ENCODE measurements at regions of chr9 and their contacts with region 1.

Region 1: GRCh38 chr9:126704873-126705766 is 91.4 kb downstream of the LMX1B start:
- DNase-seq: peak; percentile 92
- H3K4me3 ChIP-seq: no peak overlapping the region
- H3K27ac ChIP-seq: no peak overlapping the region
- H3K4me1 ChIP-seq: peaks cover 14% of the 10 kb centered on the region
- H3K27me3 ChIP-seq: no peaks in the 10 kb centered on the region
- CTCF ChIP-seq: peak; percentile 91 to 97 (median 92)
- POLR2A ChIP-seq: no peak

Region 2: DNA sequence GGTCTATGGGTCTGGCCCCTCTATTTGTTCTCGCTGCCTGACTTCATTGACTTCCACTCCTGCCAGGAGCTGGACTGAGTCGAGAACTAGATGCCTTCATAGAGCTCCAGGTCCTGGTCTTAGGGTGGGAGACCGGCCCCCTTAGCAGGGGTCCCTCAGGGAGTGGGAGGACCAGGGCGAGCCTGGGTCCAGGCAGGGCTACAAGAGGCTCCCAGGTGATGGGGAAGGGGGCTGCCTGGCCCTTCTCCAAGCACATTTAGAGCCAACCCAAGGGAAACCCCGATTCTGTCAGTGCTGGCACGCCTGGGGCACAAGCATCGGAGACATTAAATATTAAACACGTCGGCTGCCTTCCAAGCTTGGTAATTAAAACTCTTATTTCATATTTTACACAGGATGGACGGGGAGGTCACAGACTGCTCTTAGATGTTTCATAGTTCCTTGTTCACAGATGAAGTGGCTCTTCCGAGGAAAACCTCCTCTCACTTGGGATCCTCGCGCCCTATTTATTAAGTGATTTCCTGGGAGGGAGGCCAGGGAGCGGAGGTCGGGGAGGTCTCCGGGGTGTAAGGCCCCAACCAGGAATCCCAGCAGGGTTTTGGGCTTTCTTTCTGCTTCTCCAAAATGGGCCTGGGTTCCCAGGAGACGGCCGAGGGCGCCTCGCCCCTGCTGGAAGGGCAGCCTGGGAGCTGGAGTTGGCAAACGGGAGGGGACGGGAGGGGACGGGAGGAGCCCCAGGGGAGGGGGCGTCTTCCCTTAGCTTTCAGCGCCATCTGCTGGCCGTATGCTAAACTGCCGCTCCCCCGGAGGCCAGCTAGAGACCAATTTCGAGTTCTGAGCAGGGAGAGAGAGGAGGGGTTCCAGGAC is 76.3 kb after region 1 on chr9:
- intact Hi-C with region 1: loop called (anchors 10 kb)
- DNase-seq: peak; percentile 92
- H3K4me3 ChIP-seq: peak overlapping the region in 1 of 2 donors; percentile 20
- H3K27ac ChIP-seq: no peak overlapping the region
- H3K4me1 ChIP-seq: no peaks in the 10 kb centered on the region
- H3K27me3 ChIP-seq: no peaks in the 10 kb centered on the region
- CTCF ChIP-seq: peak; percentile 78 to 97 (median 86)
- POLR2A ChIP-seq: no peak

Measured in testis (tissue), 5 donors.